ENCODE measurements at regions of chr3 and their contacts with region 1.

Region 1: DNA sequence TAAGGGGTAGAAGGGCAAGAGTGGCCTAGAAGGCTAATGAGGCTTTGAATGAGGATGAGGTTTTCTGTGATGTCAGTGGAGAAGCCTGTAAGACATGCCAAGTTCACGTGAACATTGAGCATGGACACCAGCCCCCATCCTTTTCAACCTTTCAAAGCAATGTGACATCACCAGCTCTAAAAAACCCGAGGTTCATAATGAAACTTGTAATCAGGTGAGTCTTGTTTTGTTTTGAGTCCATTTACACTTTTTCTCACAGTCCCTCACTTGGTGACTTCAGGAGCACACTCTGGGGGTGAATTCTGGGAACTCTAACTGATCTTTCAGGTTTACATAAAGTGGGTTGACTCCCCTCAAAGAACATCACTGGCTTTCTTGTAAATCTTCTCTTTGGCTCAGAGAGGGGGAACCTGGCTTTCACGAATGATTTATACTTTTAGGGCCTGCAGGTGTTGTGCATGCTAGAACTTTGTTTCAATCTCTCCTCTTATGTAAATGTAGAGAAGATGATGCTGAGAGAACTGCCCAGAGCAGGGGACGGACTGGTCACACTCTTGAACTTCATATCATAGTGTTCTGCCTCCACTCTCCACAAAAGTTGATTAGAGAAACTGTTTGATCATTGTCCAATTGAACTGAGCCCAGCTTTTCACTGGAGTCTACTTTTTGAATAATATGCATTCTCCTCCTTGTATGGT is 224.7 kb upstream of the SATB1 start:
- DNase-seq: peak; percentile 80
- ATAC-seq: peak; percentile 79
- H3K4me3 Mint-ChIP-seq: peak overlapping the region; percentile 34
- H3K27ac Mint-ChIP-seq: peak overlapping the region; percentile 98
- H3K4me1 Mint-ChIP-seq: peaks cover 84% of the 10 kb centered on the region
- H3K27me3 Mint-ChIP-seq: no peaks in the 10 kb centered on the region

Region 2: DNA sequence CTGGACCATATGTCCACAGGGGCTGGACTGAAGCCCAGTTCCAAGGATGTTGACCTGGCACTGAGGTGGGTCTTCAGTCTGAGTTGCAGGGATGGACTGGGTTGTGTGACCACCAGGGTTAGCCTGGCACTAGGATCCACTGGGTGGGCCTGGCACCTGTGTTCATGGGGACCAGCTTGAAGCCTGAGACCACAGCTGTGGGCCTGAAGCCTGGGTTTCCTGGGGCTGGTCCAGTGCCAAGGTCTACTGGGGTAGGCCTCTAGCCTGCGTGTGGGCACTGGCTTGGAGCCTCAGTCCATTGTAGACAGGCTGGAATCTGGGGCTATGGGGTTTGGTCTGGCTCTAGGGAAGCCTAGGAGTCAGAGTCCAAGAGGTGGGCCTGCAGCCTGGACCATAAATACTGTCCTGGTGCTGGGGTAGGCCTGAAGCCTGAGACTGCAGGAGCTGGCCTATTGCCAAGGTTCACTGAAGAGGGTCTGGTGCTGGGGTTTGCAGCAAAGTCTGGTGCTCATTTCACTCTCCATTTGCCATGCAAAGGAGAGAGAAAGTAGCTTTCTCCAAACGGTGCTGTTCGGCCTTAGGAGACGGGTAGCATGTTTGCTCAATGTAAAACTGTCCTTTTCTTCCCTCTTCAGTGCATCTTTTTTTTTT is 856.1 kb before region 1 on chr3:
- CTCF ChIA-PET with region 1: no interaction called
- POLR2A ChIA-PET with region 1: no interaction called
- intact Hi-C with region 1: no loop called
- DNase-seq: no peak
- ATAC-seq: no peak
- H3K4me3 Mint-ChIP-seq: no peak overlapping the region
- H3K27ac Mint-ChIP-seq: no peak overlapping the region
- H3K4me1 Mint-ChIP-seq: peaks cover 4% of the 10 kb centered on the region
- H3K27me3 Mint-ChIP-seq: peaks cover 4% of the 10 kb centered on the region

Region 3: GRCh38 chr3:18424729-18425640 is 224.8 kb before region 1 on chr3 and contains the start of gene SATB1:
- CTCF ChIA-PET with region 1: interaction called, 3 read pairs
- POLR2A ChIA-PET with region 1: interaction called, 8 read pairs
- intact Hi-C with region 1: loop called in 1 of 2 experiments (anchors 5 kb)
- DNase-seq: peak; percentile 84
- ATAC-seq: peak; percentile 15
- H3K4me3 Mint-ChIP-seq: peak within 1 kb of the TSS; percentile 85
- H3K27ac Mint-ChIP-seq: peak within 1 kb of the TSS; percentile 97
- H3K4me1 Mint-ChIP-seq: peaks cover 71% of the 10 kb centered on the region
- H3K27me3 Mint-ChIP-seq: no peaks in the 10 kb centered on the region
- total RNA-seq, gene SATB1: 471 to 590 TPM

Region 4: GRCh38 chr3:18444595-18445400 is 205.0 kb before region 1 on chr3:
- CTCF ChIA-PET with region 1: no interaction called
- POLR2A ChIA-PET with region 1: interaction called, 5 read pairs
- intact Hi-C with region 1: loop called (anchors 1 to 2 kb)
- DNase-seq: peak; percentile 89
- ATAC-seq: peak; percentile 66
- H3K4me3 Mint-ChIP-seq: peak overlapping the region; percentile 96
- H3K27ac Mint-ChIP-seq: peak overlapping the region; percentile 91
- H3K4me1 Mint-ChIP-seq: peaks cover 25% of the 10 kb centered on the region
- H3K27me3 Mint-ChIP-seq: no peaks in the 10 kb centered on the region

Region 5: GRCh38 chr3:18679238-18679637 is 29.4 kb after region 1 on chr3:
- CTCF ChIA-PET with region 1: interaction called, 4 read pairs
- POLR2A ChIA-PET with region 1: interaction called, 9 read pairs
- intact Hi-C with region 1: loop called (anchors 1 kb)
- DNase-seq: peak; percentile 69
- ATAC-seq: peak; percentile 87
- H3K4me3 Mint-ChIP-seq: peak overlapping the region; percentile 28
- H3K27ac Mint-ChIP-seq: peak overlapping the region; percentile 94
- H3K4me1 Mint-ChIP-seq: peaks cover 84% of the 10 kb centered on the region
- H3K27me3 Mint-ChIP-seq: no peaks in the 10 kb centered on the region

Region 6: DNA sequence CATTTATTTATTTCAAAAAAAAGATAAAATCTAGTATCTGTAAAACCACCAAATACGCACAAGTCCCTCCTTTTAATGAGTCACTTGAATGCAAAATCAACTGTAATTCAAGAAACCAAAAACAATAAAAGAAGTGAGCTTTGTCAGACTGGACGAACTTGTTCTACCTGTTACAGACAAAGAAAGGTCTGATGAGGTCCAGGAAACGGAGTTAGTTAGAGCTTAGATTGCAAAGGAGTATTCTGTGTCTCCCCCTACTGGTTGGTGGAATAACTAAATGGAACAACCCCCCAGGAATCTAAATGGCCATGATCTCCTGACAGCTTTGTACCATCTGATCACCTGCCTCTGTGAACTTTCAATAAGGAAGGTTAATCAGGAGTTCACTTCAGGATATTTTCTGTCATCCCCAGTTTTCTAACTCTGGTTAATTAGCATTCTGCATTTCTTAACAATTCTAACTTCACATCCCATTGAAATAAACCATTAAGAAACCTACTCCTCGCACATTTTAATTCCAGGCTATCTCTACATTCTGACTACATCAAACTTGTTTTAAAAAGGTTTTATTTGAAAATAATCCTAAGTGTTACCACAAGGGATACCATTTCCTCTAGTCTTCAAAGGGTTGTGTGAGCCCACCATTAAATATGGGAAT is 108.4 kb after region 1 on chr3:
- CTCF ChIA-PET with region 1: interaction called, 9 read pairs
- POLR2A ChIA-PET with region 1: interaction called, 5 read pairs
- intact Hi-C with region 1: loop called in 1 of 2 experiments (anchors 1 kb)
- DNase-seq: no peak
- ATAC-seq: peak; percentile 95
- H3K4me3 Mint-ChIP-seq: no peak overlapping the region
- H3K27ac Mint-ChIP-seq: peak overlapping the region; percentile 90
- H3K4me1 Mint-ChIP-seq: peaks cover 48% of the 10 kb centered on the region
- H3K27me3 Mint-ChIP-seq: no peaks in the 10 kb centered on the region

Region 7: DNA sequence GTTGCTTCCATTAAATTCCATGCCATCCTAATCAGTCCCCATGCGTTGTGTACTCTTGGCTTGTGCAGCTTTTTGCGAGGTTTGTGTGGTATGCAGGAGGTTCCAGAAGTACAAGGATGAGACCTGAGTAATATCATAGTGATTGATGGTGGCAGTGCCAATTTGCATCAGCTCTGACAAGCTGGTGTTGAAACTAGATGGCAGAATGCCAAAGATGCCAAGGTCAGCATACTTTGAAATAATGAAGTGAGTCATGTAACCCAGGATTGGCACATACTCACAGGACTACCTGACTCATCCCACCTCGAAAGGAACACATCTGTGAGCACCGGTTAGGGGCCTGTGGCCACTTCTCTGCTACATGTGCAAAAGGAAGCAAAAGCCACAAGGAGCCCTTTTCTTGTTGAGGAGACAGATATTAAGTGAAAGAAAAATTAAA is 1404.8 kb after region 1 on chr3:
- CTCF ChIA-PET with region 1: no interaction called
- POLR2A ChIA-PET with region 1: no interaction called
- intact Hi-C with region 1: loop called in 1 of 2 experiments (anchors 10 kb)
- DNase-seq: peak; percentile 83
- ATAC-seq: peak; percentile 85
- H3K4me3 Mint-ChIP-seq: no peak overlapping the region
- H3K27ac Mint-ChIP-seq: no peak overlapping the region
- H3K4me1 Mint-ChIP-seq: peaks cover 38% of the 10 kb centered on the region
- H3K27me3 Mint-ChIP-seq: no peaks in the 10 kb centered on the region